ENCODE measurements at regions of chr2 and their contacts with region 1.

Region 1: DNA sequence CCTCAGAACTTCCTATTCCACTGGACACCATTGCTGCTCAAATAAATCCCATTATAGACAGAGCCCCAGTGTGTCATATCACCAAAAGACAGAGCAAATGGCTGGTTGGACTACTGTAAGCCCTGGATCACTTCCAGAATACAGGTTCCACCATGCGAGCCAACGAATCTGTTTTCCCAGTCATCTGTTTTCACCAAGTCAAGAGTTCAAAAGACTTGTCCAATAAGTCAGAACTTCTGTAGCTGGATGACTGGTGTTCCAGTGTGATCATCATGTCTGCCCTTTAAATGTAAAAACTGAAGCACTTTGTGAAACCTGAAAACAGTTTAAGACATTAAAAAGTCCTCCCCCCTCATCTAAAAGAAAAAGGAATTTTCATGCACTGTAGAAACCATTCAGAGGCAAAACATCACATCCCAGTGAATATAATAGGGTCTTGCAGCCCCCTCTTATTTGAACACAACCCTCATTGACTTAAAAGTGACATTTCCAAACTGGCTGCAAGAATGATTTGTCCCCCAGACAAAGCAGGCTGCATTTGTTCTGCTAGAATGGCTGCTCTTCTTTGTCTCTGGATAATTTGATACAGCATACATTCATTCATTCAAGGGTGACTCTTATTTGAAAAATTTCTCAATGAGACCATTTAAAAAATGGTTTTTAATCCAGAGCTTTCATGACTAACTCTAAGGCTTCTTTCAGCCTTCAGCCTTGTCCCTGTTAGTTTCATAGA is 64.6 kb upstream of the TANC1 start:
- DNase-seq: no peak
- CTCF ChIP-seq: no peak

Region 2: DNA sequence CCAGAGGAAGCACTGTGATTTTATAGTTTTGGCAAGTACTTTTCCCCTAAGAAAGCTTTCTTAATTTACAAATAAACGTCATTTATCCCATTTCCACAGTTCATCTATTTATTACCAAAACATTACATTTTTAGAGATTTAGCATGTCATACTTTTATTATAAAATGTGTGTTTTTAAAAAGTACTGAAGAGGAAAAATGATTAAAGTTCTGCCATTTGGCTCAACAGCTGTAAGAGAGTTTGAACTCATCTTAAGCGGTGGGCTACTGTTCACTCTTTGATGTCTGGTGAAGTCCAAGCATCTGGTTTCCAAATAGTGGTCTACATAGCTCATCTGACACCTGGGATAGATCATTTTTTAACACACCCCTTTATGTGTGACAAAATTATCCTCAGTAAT is 13.2 kb after region 1 on chr2:
- CTCF ChIA-PET with region 1: interaction called, 12 read pairs
- POLR2A ChIA-PET with region 1: no interaction called
- DNase-seq: no peak
- CTCF ChIP-seq: no peak

Region 3: GRCh38 chr2:158948964-158949699 is 45.3 kb after region 1 on chr2:
- CTCF ChIA-PET with region 1: no interaction called
- POLR2A ChIA-PET with region 1: no interaction called
- DNase-seq: no peak
- CTCF ChIP-seq: no peak

Region 4: DNA sequence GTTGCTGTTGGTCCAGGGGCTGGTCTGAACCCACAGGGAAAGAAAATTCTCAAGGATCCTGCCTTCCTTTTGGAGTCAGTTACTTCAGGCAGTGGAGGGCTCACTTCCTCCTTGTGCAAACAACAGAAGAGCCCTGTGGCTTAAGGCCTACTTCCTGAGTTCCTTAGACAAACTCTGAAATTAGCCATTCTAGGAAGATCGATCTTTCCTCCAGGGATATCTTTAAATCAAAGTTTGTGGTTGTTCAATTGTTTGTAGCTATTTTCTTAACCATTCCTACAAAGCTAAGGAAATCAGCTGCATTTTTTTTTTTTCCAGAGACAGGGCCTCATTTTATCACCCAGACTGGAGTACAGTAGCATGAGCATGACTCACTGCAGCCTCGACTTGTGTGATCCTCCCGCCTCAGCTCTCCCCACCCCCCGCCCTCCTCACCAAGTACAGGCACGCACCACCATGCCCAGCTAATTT is 220.6 kb after region 1 on chr2:
- CTCF ChIA-PET with region 1: interaction called, 77 read pairs
- POLR2A ChIA-PET with region 1: no interaction called
- DNase-seq: no peak
- CTCF ChIP-seq: no peak